ENCODE measurements at regions of chr21 and their contacts with region 1.

Region 1: GRCh38 chr21:37281993-37282392 is 14.9 kb upstream of the VPS26C start:
- DNase-seq: peak in 3 of 14 experiments; percentile 15 to 31 (median 24)
- ATAC-seq: no peak
- H3K4me3 ChIP-seq: peak overlapping the region; percentile 22
- H3K4me3 Mint-ChIP-seq: peak overlapping the region; percentile 75
- H3K27ac ChIP-seq: no peak overlapping the region
- H3K27ac Mint-ChIP-seq: peak overlapping the region; percentile 72
- H3K4me1 ChIP-seq: no peaks in the 10 kb centered on the region
- H3K4me1 Mint-ChIP-seq: no peaks in the 10 kb centered on the region
- H3K27me3 ChIP-seq: no peaks in the 10 kb centered on the region
- H3K27me3 Mint-ChIP-seq: no peaks in the 10 kb centered on the region
- CTCF ChIP-seq: no peak

Region 2: GRCh38 chr21:37257511-37257966 is 24.5 kb before region 1 on chr21:
- CTCF ChIA-PET with region 1: no interaction called
- POLR2A ChIA-PET with region 1: no interaction called
- intact Hi-C with region 1: no loop called
- DNase-seq: peak in 3 of 14 experiments; percentile 44 to 55 (median 52)
- ATAC-seq: peak; percentile 51
- H3K4me3 ChIP-seq: peak overlapping the region; percentile 63
- H3K4me3 Mint-ChIP-seq: peak overlapping the region; percentile 84
- H3K27ac ChIP-seq: peak overlapping the region in 1 of 2 donors; percentile 44
- H3K27ac Mint-ChIP-seq: peak overlapping the region; percentile 88
- H3K4me1 ChIP-seq: peaks cover 15% of the 10 kb centered on the region
- H3K4me1 Mint-ChIP-seq: peaks cover 52% of the 10 kb centered on the region
- H3K27me3 ChIP-seq: no peaks in the 10 kb centered on the region
- H3K27me3 Mint-ChIP-seq: no peaks in the 10 kb centered on the region
- CTCF ChIP-seq: no peak

Region 3: GRCh38 chr21:37350472-37350871 is 68.5 kb after region 1 on chr21:
- CTCF ChIA-PET with region 1: no interaction called
- POLR2A ChIA-PET with region 1: no interaction called
- intact Hi-C with region 1: loop called in 1 of 2 experiments (anchors 5 kb)
- DNase-seq: no peak
- ATAC-seq: no peak
- H3K4me3 ChIP-seq: no peak overlapping the region
- H3K4me3 Mint-ChIP-seq: no peak overlapping the region
- H3K27ac ChIP-seq: no peak overlapping the region
- H3K27ac Mint-ChIP-seq: no peak overlapping the region
- H3K4me1 ChIP-seq: no peaks in the 10 kb centered on the region
- H3K4me1 Mint-ChIP-seq: no peaks in the 10 kb centered on the region
- H3K27me3 ChIP-seq: peaks cover 0 to 4% of the 10 kb centered on the region in 2 experiments
- H3K27me3 Mint-ChIP-seq: peaks cover 7% of the 10 kb centered on the region
- CTCF ChIP-seq: no peak